ENCODE measurements at regions of chr2 and their contacts with region 1.

Region 1: DNA sequence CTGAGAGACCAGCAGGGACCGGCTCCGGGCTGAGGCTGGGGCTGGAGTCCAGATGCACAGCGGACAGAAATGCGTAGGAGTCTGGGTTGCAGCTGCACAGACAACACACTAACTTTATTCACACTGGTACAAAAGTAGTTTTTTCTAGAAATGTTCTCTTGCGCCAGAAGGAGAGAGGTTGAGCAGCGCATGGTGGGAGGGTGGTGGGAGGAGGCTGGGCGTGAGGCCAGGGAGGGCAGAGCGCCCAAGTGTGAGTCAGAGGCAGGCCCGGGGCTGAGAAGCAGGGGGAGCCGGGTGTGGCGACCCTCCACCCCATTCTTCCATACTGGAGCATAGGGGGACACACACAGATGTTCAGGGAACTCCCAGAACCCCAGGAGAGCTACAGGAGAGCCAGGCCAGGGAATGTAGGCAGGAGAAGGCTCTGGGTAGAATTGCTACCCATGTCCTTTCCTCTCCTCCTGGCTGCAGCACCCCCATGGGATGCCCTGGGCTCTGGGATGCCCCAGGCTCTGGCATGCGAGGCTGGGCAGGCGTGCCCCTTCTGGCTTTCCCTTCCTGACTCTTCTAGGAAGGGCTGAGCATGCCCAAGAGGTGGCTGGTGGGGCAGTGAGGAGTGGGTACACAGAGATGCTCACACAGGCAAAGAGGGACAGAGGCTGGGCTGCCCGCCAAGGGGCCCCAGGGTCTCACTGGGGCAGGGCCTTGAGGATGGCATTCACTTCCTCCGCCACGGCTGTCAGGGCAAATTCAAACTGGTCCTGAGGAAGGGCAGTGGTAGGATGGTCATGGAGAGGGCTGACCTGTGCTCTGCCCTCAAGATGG is 10.6 kb downstream of the DNAJB2 start:
- DNase-seq: peak; percentile 35 to 58 (median 42)
- ATAC-seq: peak; percentile 41
- H3K4me3 ChIP-seq: no peak overlapping the region
- H3K27ac ChIP-seq: no peak overlapping the region
- H3K4me1 ChIP-seq: peaks cover 7% of the 10 kb centered on the region
- H3K27me3 ChIP-seq: no peaks in the 10 kb centered on the region
- CTCF ChIP-seq: no peak
- POLR2A ChIP-seq: no peak

Region 2: DNA sequence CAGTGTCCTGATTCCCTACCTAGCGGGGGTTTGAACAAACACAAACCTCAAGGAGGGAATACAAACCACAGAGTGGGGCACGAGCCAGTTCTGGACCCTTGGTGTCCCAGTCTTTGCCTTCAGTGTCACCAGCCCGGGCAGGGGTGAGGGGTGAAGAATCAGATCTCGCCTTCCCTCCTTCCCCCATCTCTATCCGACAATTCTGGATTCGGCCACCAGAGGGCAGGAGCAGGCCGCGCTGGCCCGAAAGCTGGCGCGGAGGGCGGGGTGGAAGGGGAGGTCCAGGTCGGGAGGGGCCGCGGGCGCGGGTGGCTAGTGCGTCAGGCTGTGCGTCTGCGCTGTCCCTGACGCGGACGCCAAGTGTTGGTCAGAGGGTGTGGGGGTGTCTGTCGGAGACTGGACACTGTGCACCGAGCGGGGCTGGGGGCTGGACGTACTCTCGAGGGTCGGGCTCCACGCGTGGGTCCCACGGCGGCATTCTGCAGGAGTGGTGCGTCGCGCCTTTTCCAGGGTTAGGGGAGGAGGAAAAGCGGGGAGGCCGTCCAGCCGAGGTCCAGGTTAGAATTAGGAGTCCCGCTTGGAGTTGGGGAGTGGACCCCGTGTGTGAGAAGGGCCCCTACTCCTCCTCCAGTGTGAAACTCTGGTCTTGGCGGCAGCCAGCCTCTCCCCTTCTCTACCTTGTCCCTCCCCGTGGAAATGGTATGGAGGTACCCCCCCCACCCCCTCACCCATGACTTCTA is 293.6 kb before region 1 on chr2:
- intact Hi-C with region 1: no loop called
- DNase-seq: peak; percentile 96 to 97 (median 96)
- ATAC-seq: peak; percentile 88
- H3K4me3 ChIP-seq: no peak overlapping the region
- H3K27ac ChIP-seq: peak overlapping the region; percentile 95 to 99 (median 98)
- H3K4me1 ChIP-seq: peaks cover 66% of the 10 kb centered on the region
- H3K27me3 ChIP-seq: peaks cover 0 to 23% of the 10 kb centered on the region in 2 donors
- CTCF ChIP-seq: peak; percentile 84 to 98 (median 96)
- POLR2A ChIP-seq: peak; percentile 76 to 97 (median 89)

Region 3: DNA sequence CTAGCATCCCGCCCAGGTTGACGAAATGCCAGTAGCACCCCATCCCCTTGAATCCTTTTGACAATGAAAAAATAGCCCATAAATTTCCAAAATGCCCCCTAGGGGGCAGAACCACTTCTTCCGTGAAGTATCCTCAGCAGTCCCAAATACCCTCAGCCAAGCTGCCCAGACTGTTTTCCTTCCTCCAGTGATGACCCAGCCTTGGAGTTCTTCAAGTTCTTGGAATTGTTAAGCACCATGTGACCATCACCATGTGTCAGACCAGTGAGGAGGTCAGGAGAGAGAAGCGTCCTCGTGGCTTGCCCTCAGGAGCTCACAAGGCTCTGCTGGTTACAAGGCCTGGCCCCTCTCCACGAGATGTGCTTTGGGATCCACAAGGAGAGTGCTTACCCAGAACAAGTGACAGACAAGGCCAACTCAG is 118.5 kb before region 1 on chr2:
- intact Hi-C with region 1: loop called (anchors 5 kb)
- DNase-seq: peak; percentile 31 to 63 (median 48)
- ATAC-seq: peak; percentile 66
- H3K4me3 ChIP-seq: no peak overlapping the region
- H3K27ac ChIP-seq: peak overlapping the region in 1 of 4 donors; percentile 32
- H3K4me1 ChIP-seq: peaks cover 20% of the 10 kb centered on the region
- H3K27me3 ChIP-seq: no peaks in the 10 kb centered on the region
- CTCF ChIP-seq: peak; percentile 51 to 70 (median 64)
- POLR2A ChIP-seq: no peak

Region 4: GRCh38 chr2:219199470-219200211 is 90.1 kb before region 1 on chr2:
- intact Hi-C with region 1: no loop called
- DNase-seq: peak in 1 of 4 donors; percentile 2
- ATAC-seq: no peak
- H3K4me3 ChIP-seq: no peak overlapping the region
- H3K27ac ChIP-seq: no peak overlapping the region
- H3K4me1 ChIP-seq: peaks cover 7% of the 10 kb centered on the region
- H3K27me3 ChIP-seq: no peaks in the 10 kb centered on the region
- CTCF ChIP-seq: no peak
- POLR2A ChIP-seq: no peak

Region 5: GRCh38 chr2:219441451-219442255 is 151.9 kb after region 1 on chr2:
- intact Hi-C with region 1: no loop called
- DNase-seq: peak; percentile 44 to 62 (median 52)
- ATAC-seq: peak; percentile 72
- H3K4me3 ChIP-seq: peak overlapping the region in 1 of 2 donors; percentile 8
- H3K27ac ChIP-seq: peak overlapping the region in 1 of 4 donors; percentile 21
- H3K4me1 ChIP-seq: peaks cover 7% of the 10 kb centered on the region
- H3K27me3 ChIP-seq: peaks cover 0 to 3% of the 10 kb centered on the region in 2 donors
- CTCF ChIP-seq: no peak
- POLR2A ChIP-seq: no peak